GM23248 (cell line): ENCODE measurements at regions of chr1 and their contacts with region 1.

Region 1: GRCh38 chr1:176559878-176560277 is 96.9 kb downstream of the PAPPA2 start:
- DNase-seq: peak; percentile 86
- H3K4me3 ChIP-seq: 0 out of 2 replicates have a peak overlapping the region, but pooled peaks have one; percentile 25
- H3K27ac ChIP-seq: peak overlapping the region; percentile 16; the same call in 1 of the 2 replicates
- H3K4me1 ChIP-seq: peaks cover 15% of the 10 kb centered on the region
- H3K27me3 ChIP-seq: peaks cover 10% of the 10 kb centered on the region

Region 2: GRCh38 chr1:176043537-176043936 is 516.3 kb before region 1 on chr1:
- in situ Hi-C with region 1: no loop called
- DNase-seq: no peak
- H3K4me3 ChIP-seq: no peak overlapping the region
- H3K27ac ChIP-seq: no peak overlapping the region
- H3K4me1 ChIP-seq: no peaks in the 10 kb centered on the region
- H3K27me3 ChIP-seq: no peaks in the 10 kb centered on the region

Region 3: DNA sequence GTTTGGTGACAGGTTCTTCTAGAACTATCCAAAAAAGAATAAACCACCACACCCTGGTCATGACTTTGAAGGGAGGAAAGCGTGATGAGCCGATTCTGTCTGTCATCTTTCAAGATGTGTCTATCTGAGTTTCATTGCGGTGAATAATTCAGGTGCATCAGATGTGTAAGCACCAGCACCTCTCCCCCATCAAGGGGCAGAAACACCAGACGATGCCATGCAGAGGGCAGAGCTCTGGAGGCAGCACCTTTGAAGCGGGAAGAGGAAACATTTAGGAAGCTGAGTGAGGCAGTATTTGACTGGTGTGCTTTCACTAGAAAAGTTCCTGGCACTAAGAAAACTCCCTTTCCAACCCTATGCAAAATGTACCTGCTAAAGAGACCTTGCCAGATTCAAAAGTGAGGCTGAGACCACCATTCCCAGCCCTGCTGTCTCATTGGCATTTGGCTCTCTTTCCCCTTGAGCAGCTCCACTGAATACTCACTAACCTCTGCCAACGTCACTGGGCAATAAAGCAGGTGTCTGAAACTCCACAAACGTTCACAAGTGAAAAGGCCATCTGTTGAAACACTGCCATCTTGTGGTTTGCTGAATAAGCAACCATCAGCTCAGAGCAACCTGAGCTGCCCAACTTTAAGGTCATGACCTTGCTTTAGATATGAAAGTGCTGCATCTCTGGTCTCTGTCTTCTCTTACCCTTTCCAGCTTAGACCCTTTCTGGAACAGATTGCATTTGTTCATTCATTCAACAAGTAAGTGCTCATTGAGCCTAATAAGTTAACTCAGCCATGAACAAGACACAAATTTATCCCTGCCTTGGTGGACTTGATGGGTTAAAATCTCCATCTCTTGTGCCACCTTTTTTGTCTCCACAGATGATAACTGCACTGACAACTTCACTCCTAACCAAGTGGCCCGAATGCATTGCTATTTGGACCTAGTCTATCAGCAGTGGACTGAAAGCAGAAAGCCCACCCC is 131.7 kb after region 1 on chr1:
- in situ Hi-C with region 1: loop called (anchors 10 kb)
- DNase-seq: peak; percentile 73
- H3K4me3 ChIP-seq: no peak overlapping the region
- H3K27ac ChIP-seq: no peak overlapping the region
- H3K4me1 ChIP-seq: no peaks in the 10 kb centered on the region
- H3K27me3 ChIP-seq: no peaks in the 10 kb centered on the region

Region 4: GRCh38 chr1:176843352-176844297 is 283.7 kb after region 1 on chr1:
- in situ Hi-C with region 1: loop called (anchors 10 kb)
- DNase-seq: peak; percentile 78
- H3K4me3 ChIP-seq: no peak overlapping the region
- H3K27ac ChIP-seq: no peak overlapping the region
- H3K4me1 ChIP-seq: no peaks in the 10 kb centered on the region
- H3K27me3 ChIP-seq: no peaks in the 10 kb centered on the region